Esophagus muscularis mucosa (tissue), 4 donors: ENCODE measurements at regions of chr17 and their contacts with region 1.

Region 1: DNA sequence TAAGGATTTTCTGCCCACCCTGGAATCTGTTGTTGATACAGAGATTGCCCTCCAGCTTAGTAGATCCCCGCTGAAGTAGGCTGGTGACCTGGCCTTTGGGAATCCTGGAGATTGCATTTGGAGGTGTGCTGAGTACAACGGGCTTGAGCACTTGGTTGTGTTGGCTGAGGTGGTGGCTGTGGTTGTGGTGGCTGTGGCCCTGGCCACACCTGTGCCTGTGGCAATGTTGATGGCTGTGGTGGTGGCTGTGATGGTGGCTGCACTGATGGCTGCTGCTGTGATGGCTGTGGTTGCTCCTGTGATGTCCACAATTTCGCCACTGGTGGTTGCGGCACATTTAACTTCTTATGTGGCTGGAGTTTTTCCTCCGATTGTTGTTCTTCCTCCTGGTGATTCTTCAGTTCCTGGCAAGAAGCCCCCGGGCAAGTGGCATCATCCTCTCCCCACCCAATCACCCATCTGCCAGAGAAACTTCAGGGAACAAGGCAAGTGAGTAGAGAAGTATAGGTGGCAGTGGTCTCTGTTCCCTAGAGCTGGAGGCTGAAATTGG is 4.2 kb downstream of the CCDC200 start:
- DNase-seq: peak; percentile 50
- H3K4me3 ChIP-seq: no peak overlapping the region
- H3K27ac ChIP-seq: no peak overlapping the region
- H3K4me1 ChIP-seq: peaks cover 0 to 8% (median 2%) of the 10 kb centered on the region in 4 donors
- H3K27me3 ChIP-seq: no peaks in the 10 kb centered on the region
- CTCF ChIP-seq: no peak
- EP300 ChIP-seq: no peak
- POLR2A ChIP-seq: no peak

Region 2: GRCh38 chr17:43330876-43331639 is 106.8 kb after region 1 on chr17:
- intact Hi-C with region 1: loop called (anchors 5 kb)
- DNase-seq: no peak
- H3K4me3 ChIP-seq: no peak overlapping the region
- H3K27ac ChIP-seq: no peak overlapping the region
- H3K4me1 ChIP-seq: peaks cover 6 to 14% (median 10%) of the 10 kb centered on the region in 4 donors
- H3K27me3 ChIP-seq: no peaks in the 10 kb centered on the region
- CTCF ChIP-seq: no peak
- EP300 ChIP-seq: no peak
- POLR2A ChIP-seq: no peak